Colonic mucosa (tissue), 4 donors: ENCODE measurements at regions of chr17 and their contacts with region 1.

Region 1: GRCh38 chr17:58504826-58505521 is 9.5 kb downstream of the MTMR4 start:
- DNase-seq: no peak
- H3K4me3 ChIP-seq: no peak overlapping the region
- H3K27ac ChIP-seq: no peak overlapping the region
- H3K4me1 ChIP-seq: no peaks in the 10 kb centered on the region
- H3K27me3 ChIP-seq: no peaks in the 10 kb centered on the region
- CTCF ChIP-seq: no peak

Region 2: DNA sequence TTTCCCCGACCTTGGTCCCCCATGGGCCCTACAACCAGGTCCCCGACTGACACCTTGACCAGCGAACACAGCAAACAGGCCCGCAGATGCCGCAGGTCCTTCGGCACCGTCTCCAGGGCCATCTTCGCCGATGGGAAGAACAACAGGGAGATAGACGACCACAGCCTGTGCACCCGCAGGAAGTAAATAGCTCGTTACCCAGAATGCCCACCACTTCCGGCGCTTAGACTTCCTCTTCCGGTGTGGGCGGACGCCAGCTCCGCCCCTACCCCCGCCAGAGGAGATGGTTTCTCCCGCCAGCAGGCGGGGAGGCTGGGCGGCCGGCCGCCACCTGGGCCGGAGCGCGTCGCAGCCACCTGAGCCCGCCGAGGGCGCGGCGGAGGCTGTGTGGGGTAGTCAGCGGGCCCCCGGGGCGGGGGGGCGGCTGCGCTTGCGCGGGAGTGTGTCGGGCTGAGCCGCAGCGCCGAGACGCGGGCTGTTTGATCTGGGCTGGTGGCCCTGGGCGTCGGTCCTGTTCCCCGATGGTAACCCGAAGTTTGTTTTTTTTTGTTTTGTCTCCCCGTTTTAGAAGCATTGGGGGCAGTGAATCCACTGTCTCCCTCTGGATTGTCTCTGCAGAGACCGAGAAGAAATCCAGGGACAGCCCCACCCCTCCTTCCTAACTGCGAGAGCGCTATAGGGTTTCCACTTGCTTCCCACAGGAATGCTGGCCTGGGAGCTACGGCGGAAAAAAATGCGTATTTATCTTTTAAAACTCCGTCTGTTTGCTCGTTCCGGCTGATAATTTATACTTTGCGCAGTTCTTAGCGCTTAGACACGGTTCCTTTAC is 152.7 kb before region 1 on chr17 and contains the start of gene SUPT4H1:
- intact Hi-C with region 1: loop called (anchors 10 kb)
- DNase-seq: peak; percentile 94
- H3K4me3 ChIP-seq: peak within 1 kb of the TSS; percentile 89
- H3K27ac ChIP-seq: peak within 1 kb of the TSS; percentile 96
- H3K4me1 ChIP-seq: no peaks in the 10 kb centered on the region
- H3K27me3 ChIP-seq: no peaks in the 10 kb centered on the region
- CTCF ChIP-seq: no peak
- total RNA-seq, gene SUPT4H1: 68.7 to 75.3 TPM